Activated T-helper 1 cell treated with anti-CD3 and anti-CD28 coated beads, Interleukin-12 subunit alpha, Interleukin-12 subunit beta, Interleukin-2, Interleukin-4 antibody, amounts not matched to agents 30 ng/mL and 10 ng/mL and 1 ng/mL, durations not matched to agents 14 hours and 24 hours and 36 hours (primary cell): ENCODE measurements at regions of chr12 and their contacts with region 1.

Region 1: DNA sequence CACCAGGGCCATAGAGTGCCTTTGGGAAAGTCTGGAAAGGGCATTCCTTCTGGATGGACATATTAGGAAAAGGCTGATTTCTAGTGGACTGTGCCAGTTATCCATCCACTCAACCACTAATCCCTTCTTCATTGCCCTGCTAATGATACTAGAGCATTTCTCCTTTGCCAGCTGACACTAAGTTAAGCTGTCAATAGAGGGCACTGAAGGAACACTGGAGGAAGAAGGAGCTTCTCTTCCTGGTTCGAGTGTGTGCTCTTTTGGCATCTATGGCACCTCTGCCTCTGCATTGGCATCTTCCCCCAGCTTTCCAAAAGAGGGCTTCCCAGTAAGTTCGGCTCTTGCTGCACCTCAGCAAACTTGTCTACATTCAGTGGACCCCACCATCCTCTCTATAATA is 165.4 kb downstream of the DERA start:
- DNase-seq: no peak
- H3K4me3 Mint-ChIP-seq: no peak overlapping the region
- H3K27ac Mint-ChIP-seq: no peak overlapping the region
- H3K4me1 Mint-ChIP-seq: no peaks in the 10 kb centered on the region
- H3K27me3 Mint-ChIP-seq: no peaks in the 10 kb centered on the region

Region 2: DNA sequence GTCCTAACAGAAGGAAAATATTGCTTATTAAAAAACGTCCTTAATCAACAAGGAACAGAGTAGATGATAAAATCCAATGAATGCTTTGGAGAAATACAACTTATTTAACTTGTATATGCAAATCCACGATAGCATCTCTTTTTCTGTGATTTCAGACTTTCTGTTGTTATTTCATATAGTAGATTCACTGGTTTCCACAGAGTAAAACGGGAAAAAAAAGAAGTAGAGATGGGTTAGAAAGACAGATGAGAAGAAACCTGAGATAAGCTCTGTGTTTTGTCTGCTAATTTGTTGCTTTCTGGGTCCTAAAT is 1565.7 kb after region 1 on chr12:
- intact Hi-C with region 1: loop called (anchors 5 kb)
- DNase-seq: no peak
- H3K4me3 Mint-ChIP-seq: no peak overlapping the region
- H3K27ac Mint-ChIP-seq: no peak overlapping the region
- H3K4me1 Mint-ChIP-seq: no peaks in the 10 kb centered on the region
- H3K27me3 Mint-ChIP-seq: no peaks in the 10 kb centered on the region